PC-9 (cell line): ENCODE measurements at regions of chr3 and their contacts with region 1.

Region 1: DNA sequence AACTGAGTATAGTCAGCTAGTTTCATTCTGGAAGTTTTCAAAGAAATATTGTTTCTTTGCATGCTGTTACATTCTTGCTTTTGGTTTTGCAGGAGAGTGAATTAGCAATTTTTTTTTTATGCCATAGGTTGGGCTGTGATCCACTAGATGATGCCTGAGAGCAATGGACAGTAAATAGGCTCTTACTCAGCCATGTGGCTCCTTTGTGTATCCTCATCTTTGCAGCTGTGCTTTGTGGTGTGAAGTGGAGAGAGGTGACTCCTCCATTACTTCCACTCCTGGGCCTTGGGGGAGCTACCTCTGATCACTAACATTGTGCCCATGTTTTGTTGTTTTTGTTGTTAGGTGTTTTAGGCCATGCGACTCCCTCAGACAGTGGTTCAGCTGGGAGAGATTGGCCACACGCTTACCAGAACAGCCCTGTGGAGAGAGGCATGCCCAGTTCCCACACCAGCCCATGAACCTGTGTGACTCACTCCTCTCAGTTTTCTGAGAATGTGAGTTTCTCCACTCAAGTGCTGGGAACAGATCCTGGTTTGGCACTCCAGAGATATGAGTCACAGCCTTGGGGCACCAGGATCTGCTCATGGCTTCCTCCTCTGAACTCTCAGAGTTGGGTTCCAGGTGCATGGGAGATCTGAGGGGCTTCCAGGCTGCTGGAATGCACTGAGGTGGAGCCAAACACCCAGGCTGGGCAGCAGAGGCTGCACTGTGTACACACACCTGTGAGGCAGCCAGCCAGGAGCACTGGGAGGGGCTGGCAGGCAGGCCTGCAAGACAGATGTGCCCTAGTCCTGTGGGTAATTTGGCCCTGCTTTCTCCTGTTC is 785.3 kb downstream of the ROBO2 start:
- DNase-seq: peak; percentile 94 to 97
- H3K4me3 ChIP-seq: no peak overlapping the region
- H3K27ac ChIP-seq: peak overlapping the region; percentile 79
- H3K4me1 ChIP-seq: peaks cover 15% of the 10 kb centered on the region
- H3K27me3 ChIP-seq: no peaks in the 10 kb centered on the region
- CTCF ChIP-seq: no peak

Region 2: GRCh38 chr3:77906102-77906709 is 81.0 kb after region 1 on chr3:
- CTCF ChIA-PET with region 1: interaction called, 4 read pairs
- POLR2A ChIA-PET with region 1: no interaction called
- intact Hi-C with region 1: loop called (anchors 1 kb)
- DNase-seq: peak; percentile 35 to 85
- H3K4me3 ChIP-seq: no peak overlapping the region
- H3K27ac ChIP-seq: peak overlapping the region; percentile 66
- H3K4me1 ChIP-seq: peaks cover 9% of the 10 kb centered on the region; the same call in 1 of the 2 replicates
- H3K27me3 ChIP-seq: no peaks in the 10 kb centered on the region
- CTCF ChIP-seq: no peak

Region 3: DNA sequence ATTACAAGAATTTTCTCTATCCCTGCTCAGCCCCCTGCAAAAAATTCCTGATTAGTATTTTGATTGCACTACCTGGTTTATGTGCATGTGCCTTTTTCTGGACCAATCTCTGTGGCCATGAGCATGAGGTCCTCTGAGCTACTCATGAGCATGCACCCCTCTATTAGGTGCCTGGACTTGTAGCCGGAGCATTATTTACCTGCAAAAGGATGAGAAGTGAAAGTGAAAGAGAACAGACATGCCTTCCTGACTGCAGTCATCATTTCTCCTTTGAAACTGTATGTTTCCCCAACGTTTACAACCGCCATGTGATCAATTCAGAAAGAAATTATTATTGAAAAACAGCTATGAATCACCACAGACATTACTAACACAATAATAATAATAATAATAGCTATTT is 223.5 kb after region 1 on chr3:
- CTCF ChIA-PET with region 1: no interaction called
- POLR2A ChIA-PET with region 1: no interaction called
- intact Hi-C with region 1: loop called (anchors 5 kb)
- DNase-seq: peak in 1 of 2 experiments; percentile 2
- H3K4me3 ChIP-seq: peak overlapping the region; percentile 21; the same call in 1 of the 2 replicates
- H3K27ac ChIP-seq: no peak overlapping the region
- H3K4me1 ChIP-seq: no peaks in the 10 kb centered on the region
- H3K27me3 ChIP-seq: no peaks in the 10 kb centered on the region
- CTCF ChIP-seq: no peak

Region 4: DNA sequence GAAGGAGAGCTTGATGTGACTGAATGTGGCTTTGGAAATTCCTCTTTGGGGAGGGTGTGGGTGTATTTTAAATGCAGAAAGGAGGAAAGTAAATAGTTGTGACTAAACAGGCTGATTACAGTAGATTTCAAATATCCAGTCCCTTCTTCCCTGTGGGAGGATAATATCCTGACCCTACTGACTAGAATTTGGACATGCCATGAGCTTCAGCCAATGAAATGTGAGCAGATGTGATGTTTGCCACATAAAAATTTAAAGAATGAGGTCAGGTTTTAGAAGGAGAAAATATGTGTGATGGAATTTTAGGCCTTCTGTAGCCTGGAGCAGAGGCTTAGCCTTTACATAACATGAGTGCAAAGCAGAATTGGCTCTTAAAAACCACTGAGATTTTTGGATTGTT is 433.6 kb after region 1 on chr3:
- CTCF ChIA-PET with region 1: interaction called, 6 read pairs
- POLR2A ChIA-PET with region 1: no interaction called
- intact Hi-C with region 1: loop called (anchors 5 kb)
- DNase-seq: peak in 1 of 2 experiments; percentile 18
- H3K4me3 ChIP-seq: no peak overlapping the region
- H3K27ac ChIP-seq: no peak overlapping the region
- H3K4me1 ChIP-seq: no peaks in the 10 kb centered on the region
- H3K27me3 ChIP-seq: no peaks in the 10 kb centered on the region
- CTCF ChIP-seq: no peak